ENCODE measurements at regions of chr18 and their contacts with region 1.

Region 1: GRCh38 chr18:22391407-22392345 is 26.0 kb downstream of the CTAGE1 start:
- DNase-seq: no peak
- ATAC-seq: peak; percentile 30

Region 2: GRCh38 chr18:21682371-21683051 is 709.2 kb before region 1 on chr18:
- intact Hi-C with region 1: no loop called
- DNase-seq: no peak
- ATAC-seq: peak; percentile 72

Region 3: GRCh38 chr18:21851327-21851972 is 540.2 kb before region 1 on chr18:
- intact Hi-C with region 1: loop called (anchors 10 kb)
- DNase-seq: no peak
- ATAC-seq: peak; percentile 42

Region 4: GRCh38 chr18:22044474-22045220 is 347.0 kb before region 1 on chr18:
- intact Hi-C with region 1: no loop called
- DNase-seq: no peak
- ATAC-seq: no peak

Region 5: DNA sequence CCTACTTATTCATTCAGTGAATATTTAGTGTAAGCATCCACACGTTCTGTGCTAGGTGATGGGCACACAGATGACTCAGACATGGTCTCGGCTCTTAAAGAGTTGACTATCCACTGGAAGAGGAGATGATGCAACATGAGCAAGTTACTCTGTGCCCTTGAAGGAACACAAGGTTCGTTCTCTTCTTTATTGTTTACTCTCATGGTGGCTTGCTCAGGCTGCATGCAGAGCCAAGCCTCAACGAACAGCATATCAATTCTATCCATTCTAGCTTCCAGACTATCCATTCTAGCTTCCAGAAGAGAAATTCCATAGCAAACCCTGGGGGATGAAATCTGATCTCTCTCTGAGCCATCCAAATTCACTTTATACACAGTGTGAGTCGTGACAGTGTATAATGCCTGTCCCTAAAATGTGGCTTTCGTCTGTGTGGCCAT is 94.2 kb after region 1 on chr18:
- intact Hi-C with region 1: no loop called
- DNase-seq: no peak
- ATAC-seq: no peak

Measured in left ventricle myocardium superior (tissue), 1 donor.